Naive thymus-derived CD4-positive, alpha-beta T cell (primary cell): ENCODE measurements at regions of chr1 and their contacts with region 1.

Region 1: GRCh38 chr1:207470927-207471326 is 16.8 kb downstream of the CR2 start:
- DNase-seq: peak in 7 of 9 donors; percentile 45 to 80 (median 65)
- ATAC-seq: peak; percentile 93
- H3K4me3 ChIP-seq: no peak overlapping the region
- H3K4me3 Mint-ChIP-seq: peak overlapping the region in 4 of 10 donors; percentile 2 to 55 (median 24)
- H3K27ac ChIP-seq: no peak overlapping the region
- H3K27ac Mint-ChIP-seq: peak overlapping the region in 7 of 9 donors; percentile 53 to 91 (median 63)
- H3K4me1 ChIP-seq: peaks cover 0 to 14% of the 10 kb centered on the region in 2 donors
- H3K4me1 Mint-ChIP-seq: peaks cover 2 to 33% (median 24%) of the 10 kb centered on the region in 7 donors
- H3K27me3 ChIP-seq: no peaks in the 10 kb centered on the region
- H3K27me3 Mint-ChIP-seq: peaks cover 0 to 7% (median 0%) of the 10 kb centered on the region in 5 donors

Region 2: GRCh38 chr1:207052911-207053769 is 417.8 kb before region 1 on chr1 and contains the start of gene PFKFB2:
- CTCF ChIA-PET with region 1: no interaction called
- POLR2A ChIA-PET with region 1: no interaction called
- intact Hi-C with region 1: no loop called
- DNase-seq: peak; percentile 93 to 97 (median 96)
- ATAC-seq: peak; percentile 93
- H3K4me3 ChIP-seq: peak within 1 kb of the TSS; percentile 85
- H3K4me3 Mint-ChIP-seq: peak within 1 kb of the TSS; percentile 95 to 100 (median 98)
- H3K27ac ChIP-seq: peak within 1 kb of the TSS; percentile 72
- H3K27ac Mint-ChIP-seq: peak within 1 kb of the TSS; percentile 86 to 100 (median 97)
- H3K4me1 ChIP-seq: peaks cover 11 to 16% of the 10 kb centered on the region in 2 donors
- H3K4me1 Mint-ChIP-seq: peaks cover 25 to 54% (median 49%) of the 10 kb centered on the region in 7 donors
- H3K27me3 ChIP-seq: no peaks in the 10 kb centered on the region
- H3K27me3 Mint-ChIP-seq: peaks cover 0 to 12% (median 0%) of the 10 kb centered on the region in 5 donors
- total RNA-seq, gene PFKFB2: 2.3 to 4.6 (median 3.8) TPM

Region 3: GRCh38 chr1:207454046-207454964 is 16.6 kb before region 1 on chr1 and contains the start of gene CR2:
- CTCF ChIA-PET with region 1: no interaction called
- POLR2A ChIA-PET with region 1: interaction called, 6 read pairs
- intact Hi-C with region 1: loop called in 1 of 2 experiments (anchors 1 kb)
- DNase-seq: peak; percentile 15 to 57 (median 41)
- ATAC-seq: peak; percentile 73
- H3K4me3 ChIP-seq: peak within 1 kb of the TSS; percentile 53
- H3K4me3 Mint-ChIP-seq: peak within 1 kb of the TSS in 8 of 10 donors; percentile 50 to 90 (median 82)
- H3K27ac ChIP-seq: peak within 1 kb of the TSS; percentile 48
- H3K27ac Mint-ChIP-seq: peak within 1 kb of the TSS in 6 of 9 donors; percentile 22 to 81 (median 67)
- H3K4me1 ChIP-seq: peaks cover 9 to 35% of the 10 kb centered on the region in 2 donors
- H3K4me1 Mint-ChIP-seq: peaks cover 5 to 16% (median 6%) of the 10 kb centered on the region in 7 donors
- H3K27me3 ChIP-seq: peaks cover 0 to 7% of the 10 kb centered on the region in 2 donors
- H3K27me3 Mint-ChIP-seq: peaks cover 0 to 37% (median 30%) of the 10 kb centered on the region in 5 donors
- total RNA-seq, gene CR2: 2.6 to 13.1 (median 3.4) TPM in 4 of 5 experiments, not detected in the other